Activated CD4-positive, alpha-beta T cell treated with anti-CD3 and anti-CD28 coated beads for 36 hours (primary cell): ENCODE measurements at regions of chr3 and their contacts with region 1.

Region 1: DNA sequence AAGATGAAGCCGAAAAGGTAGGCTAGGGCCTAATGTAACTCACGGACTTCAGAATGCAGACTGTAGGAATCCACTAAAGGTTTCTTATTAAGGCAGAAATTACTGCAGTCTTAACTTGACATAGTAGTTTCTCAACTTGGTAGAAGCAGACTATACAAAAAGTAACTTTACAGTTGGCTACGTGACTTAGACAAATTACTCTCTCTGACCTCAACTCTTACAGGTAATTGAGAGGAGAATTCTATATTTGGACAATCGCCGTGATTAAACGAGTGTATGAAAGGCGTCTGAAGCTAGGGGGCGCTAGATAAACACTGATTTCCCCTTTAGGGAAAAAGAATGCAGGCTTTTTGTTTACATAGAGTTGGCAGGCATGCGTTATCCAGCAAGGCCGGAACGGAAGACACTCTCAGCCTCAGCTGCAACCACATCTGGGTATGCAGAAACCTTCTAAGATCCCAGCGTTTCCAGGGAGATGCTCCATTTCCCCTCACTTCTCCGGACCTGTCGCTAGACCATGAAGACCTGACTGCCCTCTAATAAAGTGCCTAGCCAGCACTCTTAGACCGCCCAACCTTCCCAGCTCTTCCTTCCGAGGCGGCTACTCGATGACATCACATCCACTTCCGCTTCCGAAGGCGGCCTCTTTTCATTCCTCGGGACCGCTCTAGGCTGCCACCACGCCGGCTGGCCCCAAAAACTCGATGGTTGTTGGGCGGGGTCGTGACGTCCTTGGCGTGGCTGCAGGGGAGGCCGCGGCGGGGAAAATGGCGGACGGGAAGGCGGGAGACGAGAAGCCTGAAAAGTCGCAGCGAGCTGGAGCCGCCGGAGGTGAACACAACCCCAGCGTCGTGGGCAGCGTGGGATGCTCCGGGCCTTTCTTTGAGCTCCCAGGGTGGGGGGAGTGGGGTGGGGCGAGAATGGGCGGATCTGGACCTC is at the start of gene PCNP:
- DNase-seq: peak; percentile 100
- ATAC-seq: peak; percentile 78
- H3K4me3 Mint-ChIP-seq: peak within 1 kb of the TSS; percentile 85
- H3K27ac Mint-ChIP-seq: peak within 1 kb of the TSS; percentile 94
- H3K4me1 Mint-ChIP-seq: peaks cover 60% of the 10 kb centered on the region
- H3K27me3 Mint-ChIP-seq: no peaks in the 10 kb centered on the region
- total RNA-seq, gene PCNP: 213 to 264 TPM

Region 2: GRCh38 chr3:100334488-100335351 is 1239.0 kb before region 1 on chr3 and contains the start of gene NIT2:
- CTCF ChIA-PET with region 1: no interaction called
- POLR2A ChIA-PET with region 1: no interaction called
- intact Hi-C with region 1: loop called in 1 of 2 experiments (anchors 10 kb)
- DNase-seq: peak; percentile 90
- ATAC-seq: peak; percentile 98
- H3K4me3 Mint-ChIP-seq: peak within 1 kb of the TSS; percentile 92
- H3K27ac Mint-ChIP-seq: peak within 1 kb of the TSS; percentile 96
- H3K4me1 Mint-ChIP-seq: peaks cover 24% of the 10 kb centered on the region
- H3K27me3 Mint-ChIP-seq: no peaks in the 10 kb centered on the region
- total RNA-seq, gene NIT2: 59.1 to 70.8 TPM

Region 3: DNA sequence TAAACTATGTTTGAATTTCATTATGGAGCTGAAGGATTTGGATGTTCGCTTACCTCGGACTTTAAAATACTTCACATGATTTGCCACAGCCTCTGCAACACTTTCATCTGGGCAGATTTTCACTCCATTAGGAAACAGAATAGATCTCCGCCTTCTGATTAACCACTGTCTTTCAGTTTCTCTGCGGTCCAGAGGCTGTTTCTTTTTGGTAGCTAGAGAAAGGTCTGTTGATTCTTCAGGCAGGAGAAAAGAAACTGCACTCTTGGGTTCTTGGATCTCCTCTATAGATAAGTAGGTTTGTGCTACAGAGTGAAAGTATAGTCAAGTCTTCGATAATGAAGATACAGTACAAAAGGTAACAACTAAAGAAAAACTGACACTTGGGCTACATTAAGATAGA is 254.2 kb before region 1 on chr3:
- CTCF ChIA-PET with region 1: no interaction called
- POLR2A ChIA-PET with region 1: no interaction called
- intact Hi-C with region 1: no loop called
- DNase-seq: no peak
- ATAC-seq: no peak
- H3K4me3 Mint-ChIP-seq: no peak overlapping the region
- H3K27ac Mint-ChIP-seq: no peak overlapping the region
- H3K4me1 Mint-ChIP-seq: no peaks in the 10 kb centered on the region
- H3K27me3 Mint-ChIP-seq: no peaks in the 10 kb centered on the region

Region 4: GRCh38 chr3:101381809-101382208 is 191.9 kb before region 1 on chr3:
- CTCF ChIA-PET with region 1: no interaction called
- POLR2A ChIA-PET with region 1: no interaction called
- intact Hi-C with region 1: loop called in 1 of 2 experiments (anchors 2 kb)
- DNase-seq: no peak
- ATAC-seq: no peak
- H3K4me3 Mint-ChIP-seq: no peak overlapping the region
- H3K27ac Mint-ChIP-seq: no peak overlapping the region
- H3K4me1 Mint-ChIP-seq: peaks cover 60% of the 10 kb centered on the region
- H3K27me3 Mint-ChIP-seq: no peaks in the 10 kb centered on the region

Region 5: DNA sequence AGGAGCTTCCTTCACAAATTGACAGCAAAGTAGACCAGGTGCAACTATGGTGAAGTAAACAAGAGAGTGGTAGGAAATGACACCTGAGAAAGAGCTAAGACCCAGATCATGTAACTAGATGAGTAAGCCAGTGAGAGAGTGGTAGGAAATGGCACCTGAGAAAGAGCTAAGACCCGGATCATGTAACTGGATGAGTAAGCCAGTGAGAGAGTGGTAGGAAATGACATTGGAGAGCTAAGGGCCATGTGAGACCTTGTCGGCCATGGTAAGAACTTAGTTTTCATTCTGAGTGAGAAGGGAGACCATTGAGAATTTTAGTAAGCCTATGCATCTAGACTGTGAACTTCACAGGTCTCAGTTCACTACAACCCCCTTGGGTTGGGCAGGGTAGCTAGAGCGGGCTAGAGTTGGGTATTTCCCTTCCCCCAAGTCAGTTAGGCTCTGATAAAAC is 55.3 kb before region 1 on chr3:
- CTCF ChIA-PET with region 1: interaction called, 10 read pairs
- POLR2A ChIA-PET with region 1: interaction called, 6 read pairs
- intact Hi-C with region 1: loop called (anchors 1 kb)
- DNase-seq: peak; percentile 67
- ATAC-seq: peak; percentile 93
- H3K4me3 Mint-ChIP-seq: peak overlapping the region; percentile 63
- H3K27ac Mint-ChIP-seq: peak overlapping the region; percentile 92
- H3K4me1 Mint-ChIP-seq: peaks cover 58% of the 10 kb centered on the region
- H3K27me3 Mint-ChIP-seq: no peaks in the 10 kb centered on the region

Region 6: DNA sequence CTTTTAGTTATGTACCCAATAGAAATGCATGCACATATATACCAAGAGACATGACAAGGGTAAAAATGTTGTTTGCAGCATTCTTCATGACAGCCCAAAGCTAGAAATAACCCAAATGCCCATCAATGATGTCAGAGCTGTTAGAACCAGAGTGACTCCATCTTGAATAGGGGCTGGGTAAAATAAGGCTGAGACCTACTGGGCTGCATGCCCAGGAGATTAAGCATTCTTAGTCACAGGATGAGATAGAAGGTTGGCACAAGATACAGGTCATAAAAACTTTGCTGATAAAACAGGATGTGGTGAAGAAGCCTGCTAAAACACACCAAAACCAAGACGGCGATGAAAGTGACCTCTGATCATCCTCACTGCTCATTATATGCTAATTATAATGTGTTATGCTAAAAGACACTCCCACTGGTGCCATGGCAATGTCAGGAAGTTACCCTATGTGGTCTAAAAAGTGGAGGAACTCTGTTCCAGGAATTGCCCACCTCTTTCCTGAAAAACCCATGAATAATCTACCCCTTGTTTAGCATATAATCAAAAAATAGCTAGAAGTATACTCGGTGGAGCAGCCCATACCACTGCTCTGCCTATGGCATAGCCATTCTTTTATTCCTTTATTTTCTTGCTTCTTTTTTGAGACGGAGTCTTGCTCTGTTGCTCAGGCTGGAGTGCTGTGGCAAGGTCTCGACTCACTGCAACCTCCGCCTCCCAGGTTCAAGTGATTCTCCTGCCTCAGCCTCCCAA is 70.3 kb after region 1 on chr3:
- CTCF ChIA-PET with region 1: interaction called, 5 read pairs
- POLR2A ChIA-PET with region 1: no interaction called
- intact Hi-C with region 1: loop called in 1 of 2 experiments (anchors 1 kb)
- DNase-seq: peak; percentile 67
- ATAC-seq: peak; percentile 83
- H3K4me3 Mint-ChIP-seq: no peak overlapping the region
- H3K27ac Mint-ChIP-seq: peak overlapping the region; percentile 90
- H3K4me1 Mint-ChIP-seq: peaks cover 29% of the 10 kb centered on the region
- H3K27me3 Mint-ChIP-seq: no peaks in the 10 kb centered on the region

Region 7: GRCh38 chr3:101724329-101725193 is 150.8 kb after region 1 on chr3 and contains the start of gene CEP97:
- CTCF ChIA-PET with region 1: interaction called, 5 read pairs
- POLR2A ChIA-PET with region 1: no interaction called
- intact Hi-C with region 1: loop called in 1 of 2 experiments (anchors 1 kb)
- DNase-seq: peak; percentile 95
- ATAC-seq: peak; percentile 93
- H3K4me3 Mint-ChIP-seq: peak within 1 kb of the TSS; percentile 97
- H3K27ac Mint-ChIP-seq: peak within 1 kb of the TSS; percentile 97
- H3K4me1 Mint-ChIP-seq: peaks cover 46% of the 10 kb centered on the region
- H3K27me3 Mint-ChIP-seq: no peaks in the 10 kb centered on the region
- total RNA-seq, gene CEP97: 18.1 to 20.0 TPM

Region 8: DNA sequence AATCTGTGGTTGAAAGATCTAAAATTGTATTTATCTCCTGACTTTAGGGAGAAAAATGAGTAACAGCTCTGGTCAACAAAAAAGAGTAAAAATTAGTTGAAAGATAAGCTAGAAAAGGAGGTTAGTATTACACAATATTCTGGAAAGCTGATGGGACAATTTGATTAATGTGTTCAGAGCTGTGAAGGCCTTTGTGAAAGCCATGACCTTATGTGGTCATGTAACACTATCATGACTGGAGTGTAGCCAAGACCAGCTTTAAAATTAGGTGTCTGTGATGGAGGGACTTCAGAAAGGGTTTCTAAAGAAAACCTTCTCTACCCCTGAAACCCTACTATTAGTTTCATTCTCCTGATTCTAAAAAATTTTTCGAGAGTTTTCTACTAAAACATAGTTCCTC is 402.8 kb after region 1 on chr3:
- CTCF ChIA-PET with region 1: no interaction called
- POLR2A ChIA-PET with region 1: no interaction called
- intact Hi-C with region 1: no loop called
- DNase-seq: no peak
- ATAC-seq: no peak
- H3K4me3 Mint-ChIP-seq: no peak overlapping the region
- H3K27ac Mint-ChIP-seq: no peak overlapping the region
- H3K4me1 Mint-ChIP-seq: peaks cover 9% of the 10 kb centered on the region
- H3K27me3 Mint-ChIP-seq: no peaks in the 10 kb centered on the region